Common myeloid progenitor, CD34-positive (primary cell): ENCODE measurements at regions of chr1 and their contacts with region 1.

Region 1: DNA sequence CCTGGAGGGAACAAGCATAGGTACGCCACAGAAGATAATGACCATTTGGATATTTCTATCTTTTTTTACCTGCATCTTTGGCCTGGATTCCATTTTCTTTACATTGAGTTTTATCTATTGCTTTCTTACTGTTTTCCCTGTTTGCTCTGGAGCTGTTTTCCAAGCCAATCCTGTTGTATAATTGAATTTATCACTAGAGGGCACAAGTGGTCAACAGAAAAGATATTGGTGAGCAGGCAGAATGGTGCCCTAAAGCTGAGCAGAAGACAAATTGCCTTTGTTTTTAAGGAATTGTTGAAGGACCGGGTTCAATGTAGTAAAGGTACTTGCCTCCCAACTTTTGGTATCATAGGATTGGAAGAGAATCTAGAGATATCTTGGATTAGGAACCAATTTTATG is 152.8 kb downstream of the PPP1R12B start:
- DNase-seq: peak in 1 of 3 donors; percentile 28
- H3K4me3 ChIP-seq: no peak overlapping the region
- H3K27ac ChIP-seq: no peak overlapping the region
- H3K4me1 ChIP-seq: no peaks in the 10 kb centered on the region
- H3K27me3 ChIP-seq: no peaks in the 10 kb centered on the region

Region 2: DNA sequence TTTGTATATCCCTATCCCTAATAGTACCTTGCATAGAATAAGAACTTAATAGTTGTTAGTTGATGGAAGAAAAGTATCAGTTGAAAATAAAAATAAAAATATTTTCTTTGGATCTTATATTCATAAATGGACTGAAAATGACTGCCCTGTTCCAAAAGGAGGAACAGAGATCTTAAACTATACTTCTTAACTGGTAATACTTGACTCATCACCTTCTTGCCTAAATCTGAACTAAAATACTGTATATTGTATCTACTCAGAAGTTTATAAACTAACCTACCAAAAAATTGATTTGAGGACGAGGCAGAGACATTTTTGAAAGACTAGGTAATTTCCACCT is 30.2 kb after region 1 on chr1:
- CTCF ChIA-PET with region 1: interaction called, 3 read pairs
- POLR2A ChIA-PET with region 1: interaction called, 10 read pairs
- DNase-seq: no peak
- H3K4me3 ChIP-seq: no peak overlapping the region
- H3K27ac ChIP-seq: peak overlapping the region in 1 of 2 experiments; percentile 34
- H3K4me1 ChIP-seq: no peaks in the 10 kb centered on the region
- H3K27me3 ChIP-seq: no peaks in the 10 kb centered on the region

Region 3: DNA sequence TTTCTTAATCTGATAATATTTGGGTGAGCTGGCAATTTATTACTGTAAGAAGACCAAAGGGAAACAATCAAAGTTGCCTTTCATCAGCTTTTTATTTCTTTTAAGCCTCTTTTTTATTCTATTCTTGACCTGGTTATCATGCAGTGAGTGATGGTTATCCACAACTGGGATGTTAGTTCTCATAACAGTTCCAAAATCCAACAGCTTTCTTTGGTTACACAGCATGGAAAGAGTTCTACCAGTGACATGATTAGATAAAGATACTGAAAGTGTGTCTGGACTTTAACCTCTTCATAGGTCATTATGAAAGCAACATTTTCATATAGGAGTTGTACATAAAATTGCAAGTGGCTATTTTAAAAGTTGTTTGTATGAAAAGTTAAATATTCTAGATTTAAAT is 45.9 kb after region 1 on chr1:
- CTCF ChIA-PET with region 1: no interaction called
- POLR2A ChIA-PET with region 1: no interaction called
- DNase-seq: no peak
- H3K4me3 ChIP-seq: no peak overlapping the region
- H3K27ac ChIP-seq: no peak overlapping the region
- H3K4me1 ChIP-seq: no peaks in the 10 kb centered on the region
- H3K27me3 ChIP-seq: no peaks in the 10 kb centered on the region

Region 4: GRCh38 chr1:202615501-202616354 is 114.4 kb after region 1 on chr1:
- CTCF ChIA-PET with region 1: no interaction called
- POLR2A ChIA-PET with region 1: no interaction called
- DNase-seq: peak; percentile 59 to 86 (median 84)
- H3K4me3 ChIP-seq: peak overlapping the region in 6 of 7 experiments; percentile 15 to 58 (median 30)
- H3K27ac ChIP-seq: no peak overlapping the region
- H3K4me1 ChIP-seq: peaks cover 3 to 32% (median 25%) of the 10 kb centered on the region in 4 experiments
- H3K27me3 ChIP-seq: peaks cover 0 to 14% (median under 1%) of the 10 kb centered on the region in 5 experiments